PC-9 (cell line): ENCODE measurements at regions of chr19 and their contacts with region 1.

Region 1: DNA sequence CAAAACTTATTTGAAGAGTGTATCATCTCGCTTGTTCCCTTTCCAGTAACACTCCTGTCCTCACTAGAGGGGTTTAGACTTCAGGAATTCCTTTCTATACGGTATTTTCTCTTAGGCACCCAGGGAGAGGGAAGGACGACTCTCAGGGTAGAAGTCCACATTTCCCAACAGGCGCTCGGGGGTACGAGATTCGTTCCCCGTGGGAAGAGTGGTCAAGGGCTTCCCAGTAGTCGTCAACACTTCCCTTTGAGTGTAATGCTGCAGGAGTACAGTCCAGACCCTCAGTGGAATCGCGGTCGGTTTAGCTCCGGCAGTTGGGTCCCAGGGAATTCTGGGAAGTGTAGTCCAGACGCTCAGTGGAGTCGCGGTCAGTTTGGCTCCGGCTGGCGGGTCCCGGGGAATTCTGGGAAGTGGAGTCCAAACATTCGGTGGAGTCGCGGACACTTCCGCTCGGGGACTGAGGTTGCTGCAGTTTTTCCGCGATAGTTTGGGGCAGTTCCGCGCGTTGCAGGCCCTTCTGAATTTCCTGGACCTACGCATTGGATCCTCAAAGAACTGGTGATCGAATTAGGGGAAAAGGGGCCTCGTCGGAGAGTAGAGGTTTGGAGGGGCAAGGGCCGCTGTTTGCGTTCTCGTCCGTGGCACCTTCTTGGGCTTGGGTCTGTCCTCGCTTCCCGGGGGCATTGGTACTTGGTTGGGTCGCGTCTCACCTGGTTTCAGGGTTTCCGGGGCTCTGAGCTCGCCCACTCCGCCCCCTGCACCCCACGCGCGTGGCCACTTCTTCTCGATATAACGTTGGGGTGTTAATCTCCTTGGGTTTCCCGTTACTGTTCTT is at the start of gene ZNF224:
- DNase-seq: peak; percentile 85
- H3K4me3 ChIP-seq: peak within 1 kb of the TSS; percentile 65
- H3K27ac ChIP-seq: peak within 1 kb of the TSS; percentile 10; the same call in 1 of the 2 replicates
- H3K4me1 ChIP-seq: peaks cover 19% of the 10 kb centered on the region
- H3K27me3 ChIP-seq: no peaks in the 10 kb centered on the region
- CTCF ChIP-seq: no peak
- total RNA-seq, gene ZNF224: 29.3 and 30.9 TPM in 2 replicates

Region 2: GRCh38 chr19:43983912-43984686 is 110.0 kb before region 1 on chr19 and contains the start of gene ZNF155:
- CTCF ChIA-PET with region 1: no interaction called
- POLR2A ChIA-PET with region 1: no interaction called
- intact Hi-C with region 1: loop called (anchors 1 kb)
- DNase-seq: peak; percentile 84 to 94
- H3K4me3 ChIP-seq: peak within 1 kb of the TSS; percentile 82
- H3K27ac ChIP-seq: 0 out of 2 replicates have a peak within 1 kb of the TSS, but pooled peaks have one; percentile 4
- H3K4me1 ChIP-seq: no peaks in the 10 kb centered on the region; the same call in 1 of the 2 replicates
- H3K27me3 ChIP-seq: no peaks in the 10 kb centered on the region
- CTCF ChIP-seq: no peak
- total RNA-seq, gene ZNF155: 5.0 and 6.1 TPM in 2 replicates

Region 3: DNA sequence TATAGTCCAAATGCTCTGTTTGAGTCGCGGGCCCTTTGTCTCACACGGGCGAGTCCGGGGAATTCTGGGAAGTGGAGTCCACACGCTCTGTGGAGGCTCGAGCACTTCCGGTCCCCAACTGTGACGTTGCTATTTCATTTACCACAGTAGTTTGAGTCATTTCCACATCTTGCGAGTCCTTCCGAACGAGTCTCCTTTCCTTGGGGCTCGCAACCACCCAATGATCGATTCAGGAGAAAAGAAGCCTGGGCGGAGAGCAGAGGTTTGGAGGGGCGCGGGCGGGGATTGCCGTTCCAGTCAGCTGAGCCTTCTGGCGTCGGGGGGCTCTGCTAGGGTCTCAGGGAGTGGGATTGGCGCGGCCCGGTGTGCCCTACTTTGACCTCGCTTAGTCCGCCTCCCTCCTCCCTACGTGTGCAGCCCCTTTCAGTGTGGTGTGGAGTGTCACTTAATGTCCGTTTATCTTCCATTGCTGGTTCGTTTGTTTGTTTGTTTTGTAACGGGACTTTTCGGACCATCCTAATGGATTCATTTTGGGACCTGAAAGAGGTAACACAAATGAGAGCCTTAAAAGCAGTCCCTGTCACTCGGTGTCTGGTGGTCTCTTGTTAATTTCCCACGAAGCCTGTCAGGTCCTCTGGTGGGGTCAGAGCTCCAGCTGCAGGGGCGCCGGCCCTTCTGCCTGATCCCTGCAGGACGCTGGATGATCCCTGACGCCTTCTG is 68.8 kb before region 1 on chr19 and contains the start of gene ZNF222:
- CTCF ChIA-PET with region 1: no interaction called
- POLR2A ChIA-PET with region 1: no interaction called
- intact Hi-C with region 1: loop called (anchors 1 kb)
- DNase-seq: peak; percentile 62 to 77
- H3K4me3 ChIP-seq: peak within 1 kb of the TSS; percentile 84
- H3K27ac ChIP-seq: no peak within 1 kb of the TSS
- H3K4me1 ChIP-seq: peaks cover 13% of the 10 kb centered on the region
- H3K27me3 ChIP-seq: no peaks in the 10 kb centered on the region
- CTCF ChIP-seq: no peak
- total RNA-seq, gene ZNF222: 1.8 and 2.1 TPM in 2 replicates

Region 4: GRCh38 chr19:44083866-44084265 is 10.3 kb before region 1 on chr19:
- CTCF ChIA-PET with region 1: no interaction called
- POLR2A ChIA-PET with region 1: no interaction called
- intact Hi-C with region 1: no loop called
- DNase-seq: no peak
- H3K4me3 ChIP-seq: no peak overlapping the region
- H3K27ac ChIP-seq: no peak overlapping the region
- H3K4me1 ChIP-seq: no peaks in the 10 kb centered on the region
- H3K27me3 ChIP-seq: no peaks in the 10 kb centered on the region
- CTCF ChIP-seq: no peak

Region 5: GRCh38 chr19:44164673-44165512 is 70.7 kb after region 1 on chr19 and contains the start of gene ZNF226:
- CTCF ChIA-PET with region 1: no interaction called
- POLR2A ChIA-PET with region 1: no interaction called
- intact Hi-C with region 1: no loop called
- DNase-seq: peak; percentile 86 to 99
- H3K4me3 ChIP-seq: peak within 1 kb of the TSS; percentile 81
- H3K27ac ChIP-seq: peak within 1 kb of the TSS; percentile 20; the same call in 1 of the 2 replicates
- H3K4me1 ChIP-seq: peaks cover 13% of the 10 kb centered on the region
- H3K27me3 ChIP-seq: no peaks in the 10 kb centered on the region
- CTCF ChIP-seq: no peak
- total RNA-seq, gene ZNF226: 12.9 and 21.7 TPM in 2 replicates